GM10248 (cell line): ENCODE measurements at regions of chr16 and their contacts with region 1.

Region 1: GRCh38 chr16:11370084-11370931 is 25.0 kb downstream of the RMI2 start:
- DNase-seq: peak; percentile 46
- CTCF ChIP-seq: no peak

Region 2: GRCh38 chr16:11386791-11387546 is 16.7 kb after region 1 on chr16:
- CTCF ChIA-PET with region 1: interaction called, 48 read pairs
- POLR2A ChIA-PET with region 1: no interaction called
- DNase-seq: no peak
- CTCF ChIP-seq: peak; percentile 25